Ascending aorta (tissue), 2 donors: ENCODE measurements at regions of chr11 and their contacts with region 1.

Region 1: GRCh38 chr11:94417386-94417987 is 16.3 kb upstream of the GPR83 start:
- DNase-seq: no peak
- H3K4me3 ChIP-seq: no peak overlapping the region
- H3K27ac ChIP-seq: no peak overlapping the region
- H3K4me1 ChIP-seq: no peaks in the 10 kb centered on the region
- H3K27me3 ChIP-seq: no peaks in the 10 kb centered on the region
- CTCF ChIP-seq: peak in 2 of 3 experiments; percentile 43 to 60

Region 2: GRCh38 chr11:93895106-93895862 is 522.2 kb before region 1 on chr11:
- intact Hi-C with region 1: loop called (anchors 2 kb)
- DNase-seq: no peak
- H3K4me3 ChIP-seq: no peak overlapping the region
- H3K27ac ChIP-seq: no peak overlapping the region
- H3K4me1 ChIP-seq: no peaks in the 10 kb centered on the region
- H3K27me3 ChIP-seq: no peaks in the 10 kb centered on the region
- CTCF ChIP-seq: peak; percentile 46 to 89 (median 69)

Region 3: DNA sequence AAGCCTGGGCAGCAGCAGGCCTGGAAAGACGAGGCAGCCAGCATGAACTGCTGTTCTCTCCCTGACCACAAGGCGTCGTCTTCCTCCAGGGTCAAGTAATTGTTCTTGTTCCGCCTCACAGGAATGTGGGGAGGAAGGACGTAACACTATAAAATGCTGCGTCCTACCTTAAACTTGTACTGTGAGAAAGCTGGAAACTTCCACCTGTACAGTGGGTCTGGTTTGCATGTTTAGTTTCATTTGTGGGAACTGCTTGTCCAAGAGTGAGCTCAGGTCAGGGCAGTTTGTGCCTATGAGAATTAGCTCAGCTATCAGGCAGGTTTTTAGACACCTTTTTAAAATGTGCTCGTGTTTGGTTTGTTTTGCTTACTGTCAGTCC is 233.6 kb before region 1 on chr11:
- intact Hi-C with region 1: loop called (anchors 5 kb)
- DNase-seq: peak in 1 of 2 donors; percentile 72
- H3K4me3 ChIP-seq: peak overlapping the region in 1 of 2 donors; percentile 39
- H3K27ac ChIP-seq: peak overlapping the region; percentile 2 to 38
- H3K4me1 ChIP-seq: peaks cover 0 to 12% of the 10 kb centered on the region in 2 donors
- H3K27me3 ChIP-seq: no peaks in the 10 kb centered on the region
- CTCF ChIP-seq: peak; percentile 64 to 88 (median 87)